ENCODE measurements at regions of chr6 and their contacts with region 1.

Region 1: GRCh38 chr6:127266178-127266891 is at the start of gene RNF146:
- DNase-seq: no peak
- H3K4me3 ChIP-seq: peak within 1 kb of the TSS; percentile 68 to 94 (median 80)
- H3K27ac ChIP-seq: peak within 1 kb of the TSS; percentile 98 to 100 (median 99)
- H3K4me1 ChIP-seq: peaks cover 13 to 51% (median 37%) of the 10 kb centered on the region in 6 donors
- H3K27me3 ChIP-seq: no peaks in the 10 kb centered on the region
- CTCF ChIP-seq: peak; percentile 52 to 84 (median 78)
- POLR2A ChIP-seq: no peak
- total RNA-seq, gene RNF146: 43.9 to 125 (median 79.3) TPM

Region 2: DNA sequence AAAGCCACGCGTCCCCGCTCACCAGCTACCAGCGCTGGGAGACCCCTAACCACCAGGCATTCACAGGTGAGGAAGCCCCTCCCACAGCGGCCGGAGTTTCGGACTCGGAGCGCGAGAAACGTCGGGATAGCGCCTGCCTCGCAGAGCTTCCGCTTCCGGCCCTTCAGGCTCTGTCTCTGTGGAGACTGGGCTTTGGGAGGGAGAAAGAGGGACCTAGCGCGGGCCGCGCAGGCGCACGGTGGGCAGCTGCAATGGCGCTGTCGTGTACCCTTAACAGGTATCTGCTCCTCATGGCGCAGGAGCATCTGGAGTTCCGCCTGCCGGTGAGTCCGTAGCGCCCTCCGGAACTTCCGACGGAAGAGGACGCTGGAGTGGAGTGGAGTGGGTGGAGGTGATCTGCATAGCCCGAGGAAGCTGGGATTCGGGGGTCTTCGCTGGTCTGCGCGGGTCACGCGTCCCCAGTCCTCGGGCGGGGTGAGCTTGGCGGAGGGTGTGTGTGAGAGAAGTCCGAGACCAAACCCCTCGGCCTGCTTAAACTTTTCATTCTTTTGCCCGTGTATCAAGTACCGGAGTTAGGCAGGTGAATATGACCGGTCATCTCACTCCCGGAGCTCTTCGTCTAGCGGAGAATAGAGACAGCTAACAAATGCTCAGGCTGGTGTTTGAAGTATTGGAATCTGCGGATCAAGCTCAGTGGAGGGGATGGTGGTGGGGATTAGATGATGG is 1279.9 kb before region 1 on chr6 and contains the start of gene TRMT11:
- intact Hi-C with region 1: loop called (anchors 10 kb)
- DNase-seq: peak; percentile 94
- H3K4me3 ChIP-seq: peak within 1 kb of the TSS; percentile 71 to 96 (median 80)
- H3K27ac ChIP-seq: peak within 1 kb of the TSS; percentile 70 to 90 (median 81)
- H3K4me1 ChIP-seq: peaks cover 6 to 60% (median 30%) of the 10 kb centered on the region in 6 donors
- H3K27me3 ChIP-seq: no peaks in the 10 kb centered on the region
- CTCF ChIP-seq: peak in 1 of 11 experiments; percentile 16
- POLR2A ChIP-seq: peak in 1 of 3 donors; percentile 50
- total RNA-seq, gene TRMT11: 18.4 to 37.7 (median 23.8) TPM

Region 3: GRCh38 chr6:127391094-127391953 is 125.0 kb after region 1 on chr6:
- intact Hi-C with region 1: no loop called
- DNase-seq: no peak
- H3K4me3 ChIP-seq: no peak overlapping the region
- H3K27ac ChIP-seq: no peak overlapping the region
- H3K4me1 ChIP-seq: no peaks in the 10 kb centered on the region
- H3K27me3 ChIP-seq: no peaks in the 10 kb centered on the region
- CTCF ChIP-seq: no peak
- POLR2A ChIP-seq: no peak

Measured in spleen (tissue), 13 donors.